ENCODE measurements at regions of chr9 and their contacts with region 1.

Region 1: DNA sequence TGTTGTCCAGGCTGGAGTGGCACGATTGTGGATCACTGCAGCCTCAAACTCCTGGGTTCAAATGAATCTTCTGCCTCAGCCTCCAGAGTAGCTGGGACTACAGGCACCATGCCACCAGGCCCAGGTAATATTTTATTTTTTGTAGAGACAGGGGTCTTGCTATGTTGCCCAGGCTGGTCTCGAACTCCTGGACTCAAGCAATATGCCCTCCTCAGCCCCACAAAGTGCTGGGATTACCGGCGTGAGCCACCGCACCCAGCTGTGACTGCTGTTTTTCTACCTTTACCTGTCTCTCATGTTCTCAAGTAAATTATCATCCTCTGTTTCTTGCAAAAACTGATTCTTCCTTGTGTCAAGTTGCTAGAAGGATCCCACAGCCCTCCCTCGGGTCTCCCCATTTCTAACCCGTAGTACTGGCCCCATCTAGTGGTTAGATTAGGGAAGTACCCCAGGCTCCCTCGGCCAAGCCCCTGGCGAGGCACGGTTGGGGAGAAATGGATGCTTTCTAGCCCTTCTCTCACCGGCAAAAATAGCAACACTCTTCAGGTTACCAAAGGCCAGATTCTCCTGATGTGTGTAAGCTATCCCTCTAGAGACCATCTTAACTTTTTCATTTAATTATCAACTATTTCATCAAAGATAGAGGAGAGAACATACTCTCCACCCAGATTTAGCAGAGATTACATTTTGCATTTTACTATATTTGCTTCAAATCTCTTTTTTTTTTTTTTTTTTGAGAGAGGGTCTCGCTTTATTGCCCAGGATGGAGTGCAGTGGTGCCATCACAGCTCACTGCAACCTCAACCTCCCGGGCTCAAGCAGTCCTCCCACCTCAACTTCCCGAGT is 19.2 kb upstream of the TOR1B start:
- ATAC-seq: peak; percentile 74 to 99 (median 93)
- H3K4me3 ChIP-seq: no peak overlapping the region
- H3K27ac ChIP-seq: no peak overlapping the region
- H3K4me1 ChIP-seq: no peaks in the 10 kb centered on the region

Region 2: GRCh38 chr9:129139993-129140396 is 643.7 kb before region 1 on chr9:
- in situ Hi-C with region 1: loop called in 6 of 9 experiments (anchors 10 to 25 kb)
- ATAC-seq: peak; percentile 58 to 79 (median 72)
- H3K4me3 ChIP-seq: peak overlapping the region in 3 of 5 donors; percentile 6 to 17 (median 9)
- H3K27ac ChIP-seq: peak overlapping the region; percentile 99 to 100
- H3K4me1 ChIP-seq: peaks cover 50 to 53% of the 10 kb centered on the region in 2 donors

Region 3: GRCh38 chr9:129630967-129631672 is 152.6 kb before region 1 on chr9:
- in situ Hi-C with region 1: loop called in 6 of 9 experiments (anchors 10 to 25 kb)
- ATAC-seq: peak in 3 of 8 experiments; percentile 3 to 4 (median 3)
- H3K4me3 ChIP-seq: no peak overlapping the region
- H3K27ac ChIP-seq: no peak overlapping the region
- H3K4me1 ChIP-seq: peaks cover 13 to 19% of the 10 kb centered on the region in 2 donors

Region 4: DNA sequence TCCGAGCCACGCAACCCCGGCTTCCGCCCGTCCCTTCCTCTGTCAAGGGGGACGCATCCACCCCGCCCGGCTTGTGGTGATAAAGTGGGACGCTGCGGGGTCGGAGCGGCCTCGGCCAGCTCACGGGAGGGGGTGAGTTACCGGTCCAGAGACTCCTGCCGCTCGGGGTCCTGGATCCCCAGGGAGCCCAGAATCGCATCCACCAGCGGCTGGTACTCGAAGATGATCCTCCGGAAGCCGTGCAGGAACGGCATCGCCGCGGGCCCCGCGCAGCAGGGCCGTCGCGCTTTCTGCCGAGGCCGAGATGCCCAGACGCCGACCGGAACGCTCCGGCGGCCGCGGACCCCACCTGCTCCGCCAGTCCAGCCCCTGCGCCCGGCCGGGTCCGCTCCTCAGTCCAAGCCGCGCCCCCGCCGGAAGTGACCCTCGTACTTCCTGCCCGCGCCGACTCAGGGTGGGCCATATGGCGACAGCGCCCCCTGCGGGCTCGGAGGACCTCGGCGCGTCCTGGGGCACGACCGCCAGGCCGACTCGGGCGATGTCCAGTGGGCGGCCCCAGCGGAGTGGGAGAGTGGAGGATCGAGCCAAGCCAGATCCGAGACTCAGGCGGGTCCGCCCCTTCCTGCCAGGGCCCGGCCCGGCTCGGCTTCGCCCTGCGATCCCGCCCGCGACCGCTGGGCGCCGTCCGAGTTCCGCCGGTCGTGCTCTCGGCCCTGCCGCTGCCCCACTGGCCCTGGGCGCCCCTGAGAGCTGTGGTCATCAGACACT is 141.8 kb before region 1 on chr9 and contains the start of gene ASB6:
- in situ Hi-C with region 1: loop called in 7 of 9 experiments (anchors 10 to 25 kb)
- ATAC-seq: peak; percentile 84 to 97 (median 92)
- H3K4me3 ChIP-seq: peak within 1 kb of the TSS; percentile 77 to 96 (median 81)
- H3K27ac ChIP-seq: peak within 1 kb of the TSS; percentile 35 to 85
- H3K4me1 ChIP-seq: peaks cover 19 to 21% of the 10 kb centered on the region in 2 donors
- total RNA-seq, gene ASB6: 12.0 to 44.5 (median 18.5) TPM

Region 5: GRCh38 chr9:129665389-129665775 is 118.4 kb before region 1 on chr9 and contains the start of gene PRRX2:
- in situ Hi-C with region 1: loop called in 1 of 9 experiments (anchors 25 kb)
- ATAC-seq: peak; percentile 53 to 89 (median 72)
- H3K4me3 ChIP-seq: peak within 1 kb of the TSS in 4 of 5 donors; percentile 7 to 12 (median 11)
- H3K27ac ChIP-seq: no peak within 1 kb of the TSS
- H3K4me1 ChIP-seq: peaks cover 0 to 5% of the 10 kb centered on the region in 2 donors
- total RNA-seq, gene PRRX2: 0.14 to 14.4 (median 0.87) TPM in 7 of 8 experiments, not detected in the other

Region 6: DNA sequence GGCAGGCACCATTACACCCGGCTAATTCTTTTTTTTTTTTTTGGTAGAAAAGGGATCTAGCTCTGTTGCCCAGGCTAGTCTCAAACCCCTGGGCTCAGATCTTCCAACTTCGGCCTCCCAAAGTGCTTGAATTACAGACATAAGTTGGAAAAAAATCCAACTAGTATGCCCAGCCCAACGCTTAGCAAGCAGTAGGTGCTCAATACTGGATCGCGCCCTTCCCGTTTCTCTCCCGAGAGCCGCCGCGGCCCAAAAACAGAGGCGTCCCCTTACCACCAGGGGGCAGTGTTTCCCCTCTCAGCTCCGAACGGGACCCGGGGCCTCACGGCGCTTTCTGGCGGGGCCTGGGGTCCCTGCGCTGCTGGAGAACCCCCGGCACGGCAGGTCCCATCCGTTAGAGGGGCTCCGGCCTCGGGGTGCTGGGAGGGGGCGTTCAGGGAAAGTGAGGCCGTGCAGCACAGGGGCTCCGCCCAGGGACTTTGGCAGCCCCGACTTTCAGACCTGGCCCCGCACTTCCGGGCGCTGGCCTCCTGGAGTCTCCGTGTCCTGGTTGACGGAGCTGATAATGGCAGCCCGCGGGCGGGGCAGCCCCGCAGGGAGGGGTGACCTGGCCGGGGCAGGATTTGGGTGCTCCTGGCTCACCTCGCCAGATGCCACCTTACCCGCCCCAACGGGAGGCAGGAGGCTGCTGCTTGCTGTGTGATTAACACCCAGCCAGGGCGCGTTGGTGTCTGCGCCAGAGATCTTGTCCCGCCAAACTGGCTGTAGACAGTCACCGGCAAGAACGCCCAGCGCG is 46.1 kb before region 1 on chr9:
- in situ Hi-C with region 1: loop called in 4 of 9 experiments (anchors 5 to 10 kb)
- ATAC-seq: peak; percentile 64 to 96 (median 88)
- H3K4me3 ChIP-seq: peak overlapping the region; percentile 13 to 36 (median 33)
- H3K27ac ChIP-seq: no peak overlapping the region
- H3K4me1 ChIP-seq: no peaks in the 10 kb centered on the region

Region 7: DNA sequence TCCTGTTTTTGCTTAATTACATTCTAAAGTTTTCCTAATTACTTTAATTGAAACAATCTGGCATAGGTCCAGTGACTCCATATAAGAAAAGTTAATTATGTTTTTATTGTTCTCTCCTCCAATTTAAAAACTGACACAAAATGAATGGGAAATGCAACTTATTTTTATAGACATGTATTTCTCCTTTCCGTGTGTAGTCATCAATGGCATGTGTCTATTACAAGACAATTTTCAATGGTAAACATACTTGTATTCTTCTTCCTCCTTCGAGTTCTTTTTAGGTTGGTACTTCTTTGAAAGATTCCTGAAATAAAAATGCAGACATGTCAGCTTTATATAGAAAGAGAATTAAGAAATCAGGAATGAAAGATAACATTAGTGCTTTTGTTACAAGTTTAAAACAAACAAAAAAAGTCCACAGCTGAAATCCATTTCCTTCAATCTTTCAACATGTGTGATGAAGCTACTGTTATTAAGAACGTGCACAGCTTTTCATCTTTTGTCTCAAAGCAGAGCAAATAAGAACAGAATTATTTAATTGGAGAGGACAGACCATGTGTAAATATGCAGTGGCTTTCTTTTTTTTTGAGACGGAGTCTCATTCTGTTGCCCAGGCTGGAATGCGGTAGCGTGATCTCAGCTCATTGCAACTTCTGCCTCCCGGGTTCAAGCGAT is 195.5 kb after region 1 on chr9:
- in situ Hi-C with region 1: no loop called
- ATAC-seq: no peak
- H3K4me3 ChIP-seq: no peak overlapping the region
- H3K27ac ChIP-seq: no peak overlapping the region
- H3K4me1 ChIP-seq: no peaks in the 10 kb centered on the region